ENCODE measurements at regions of chr5 and their contacts with region 1.

Region 1: GRCh38 chr5:14871210-14872069 is at the start of gene ANKH:
- DNase-seq: peak; percentile 66 to 93 (median 81)
- ATAC-seq: peak; percentile 81
- H3K4me3 ChIP-seq: peak within 1 kb of the TSS; percentile 63 to 78
- H3K4me3 Mint-ChIP-seq: peak within 1 kb of the TSS; percentile 95
- H3K27ac ChIP-seq: peak within 1 kb of the TSS; percentile 63 to 66
- H3K27ac Mint-ChIP-seq: peak within 1 kb of the TSS; percentile 94
- H3K4me1 ChIP-seq: peaks cover 13% of the 10 kb centered on the region
- H3K4me1 Mint-ChIP-seq: peaks cover 38% of the 10 kb centered on the region
- H3K27me3 ChIP-seq: no peaks in the 10 kb centered on the region
- H3K27me3 Mint-ChIP-seq: no peaks in the 10 kb centered on the region
- CTCF ChIP-seq: no peak
- total RNA-seq, gene ANKH: 56.0 to 57.7 TPM

Region 2: GRCh38 chr5:14706615-14707021 is 164.8 kb before region 1 on chr5:
- CTCF ChIA-PET with region 1: interaction called, 4 read pairs
- POLR2A ChIA-PET with region 1: interaction called, 7 read pairs
- intact Hi-C with region 1: loop called (anchors 2 to 5 kb)
- DNase-seq: peak in 8 of 9 experiments; percentile 33 to 83 (median 60)
- ATAC-seq: peak; percentile 94
- H3K4me3 ChIP-seq: no peak overlapping the region
- H3K4me3 Mint-ChIP-seq: peak overlapping the region; percentile 76
- H3K27ac ChIP-seq: peak overlapping the region; percentile 46 to 72
- H3K27ac Mint-ChIP-seq: peak overlapping the region; percentile 99
- H3K4me1 ChIP-seq: peaks cover 79% of the 10 kb centered on the region
- H3K4me1 Mint-ChIP-seq: peaks cover 80% of the 10 kb centered on the region
- H3K27me3 ChIP-seq: no peaks in the 10 kb centered on the region
- H3K27me3 Mint-ChIP-seq: no peaks in the 10 kb centered on the region
- CTCF ChIP-seq: no peak

Region 3: GRCh38 chr5:14809369-14810155 is 61.9 kb before region 1 on chr5:
- CTCF ChIA-PET with region 1: no interaction called
- POLR2A ChIA-PET with region 1: no interaction called
- intact Hi-C with region 1: loop called (anchors 1 to 5 kb)
- DNase-seq: peak; percentile 10 to 87 (median 77)
- ATAC-seq: peak; percentile 91
- H3K4me3 ChIP-seq: peak overlapping the region; percentile 16 to 18
- H3K4me3 Mint-ChIP-seq: peak overlapping the region; percentile 80
- H3K27ac ChIP-seq: peak overlapping the region in 1 of 2 experiments; percentile 53
- H3K27ac Mint-ChIP-seq: peak overlapping the region; percentile 91
- H3K4me1 ChIP-seq: peaks cover 42% of the 10 kb centered on the region
- H3K4me1 Mint-ChIP-seq: peaks cover 53% of the 10 kb centered on the region
- H3K27me3 ChIP-seq: no peaks in the 10 kb centered on the region
- H3K27me3 Mint-ChIP-seq: no peaks in the 10 kb centered on the region
- CTCF ChIP-seq: no peak

Region 4: GRCh38 chr5:14890846-14891245 is 19.4 kb after region 1 on chr5:
- CTCF ChIA-PET with region 1: no interaction called
- POLR2A ChIA-PET with region 1: no interaction called
- intact Hi-C with region 1: no loop called
- DNase-seq: no peak
- ATAC-seq: no peak
- H3K4me3 ChIP-seq: no peak overlapping the region
- H3K4me3 Mint-ChIP-seq: no peak overlapping the region
- H3K27ac ChIP-seq: no peak overlapping the region
- H3K27ac Mint-ChIP-seq: no peak overlapping the region
- H3K4me1 ChIP-seq: no peaks in the 10 kb centered on the region
- H3K4me1 Mint-ChIP-seq: no peaks in the 10 kb centered on the region
- H3K27me3 ChIP-seq: no peaks in the 10 kb centered on the region
- H3K27me3 Mint-ChIP-seq: no peaks in the 10 kb centered on the region
- CTCF ChIP-seq: no peak

Region 5: GRCh38 chr5:14976486-14976885 is 105.0 kb after region 1 on chr5:
- CTCF ChIA-PET with region 1: no interaction called
- POLR2A ChIA-PET with region 1: no interaction called
- intact Hi-C with region 1: no loop called
- DNase-seq: no peak
- ATAC-seq: no peak
- H3K4me3 ChIP-seq: no peak overlapping the region
- H3K4me3 Mint-ChIP-seq: no peak overlapping the region
- H3K27ac ChIP-seq: no peak overlapping the region
- H3K27ac Mint-ChIP-seq: no peak overlapping the region
- H3K4me1 ChIP-seq: no peaks in the 10 kb centered on the region
- H3K4me1 Mint-ChIP-seq: no peaks in the 10 kb centered on the region
- H3K27me3 ChIP-seq: no peaks in the 10 kb centered on the region
- H3K27me3 Mint-ChIP-seq: no peaks in the 10 kb centered on the region
- CTCF ChIP-seq: no peak

Region 6: DNA sequence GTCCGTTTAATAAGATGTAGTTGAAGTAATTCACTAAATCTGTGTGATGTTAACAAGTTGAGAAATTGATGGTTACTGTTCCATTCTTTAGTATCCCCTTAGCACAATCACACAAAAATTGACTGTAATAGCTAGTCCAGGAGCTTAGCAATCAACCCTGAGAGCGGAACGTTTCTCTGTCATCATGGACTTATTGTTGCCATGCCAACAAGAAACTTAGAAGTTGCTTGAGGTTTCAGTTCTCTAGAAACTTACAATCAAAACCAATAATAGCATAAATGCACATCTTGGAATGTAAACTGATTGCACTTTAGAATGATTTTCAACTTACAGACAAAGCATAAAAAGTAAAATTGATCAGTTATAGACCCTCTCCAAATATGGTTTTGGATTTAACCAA is 125.6 kb after region 1 on chr5:
- CTCF ChIA-PET with region 1: interaction called, 3 read pairs
- POLR2A ChIA-PET with region 1: interaction called, 3 read pairs
- intact Hi-C with region 1: loop called (anchors 2 to 5 kb)
- DNase-seq: peak in 1 of 9 experiments; percentile 35
- ATAC-seq: no peak
- H3K4me3 ChIP-seq: no peak overlapping the region
- H3K4me3 Mint-ChIP-seq: no peak overlapping the region
- H3K27ac ChIP-seq: no peak overlapping the region
- H3K27ac Mint-ChIP-seq: no peak overlapping the region
- H3K4me1 ChIP-seq: peaks cover 4% of the 10 kb centered on the region
- H3K4me1 Mint-ChIP-seq: peaks cover 14% of the 10 kb centered on the region
- H3K27me3 ChIP-seq: no peaks in the 10 kb centered on the region
- H3K27me3 Mint-ChIP-seq: no peaks in the 10 kb centered on the region
- CTCF ChIP-seq: no peak

Region 7: GRCh38 chr5:15003511-15003920 is 132.1 kb after region 1 on chr5:
- CTCF ChIA-PET with region 1: interaction called, 6 read pairs
- POLR2A ChIA-PET with region 1: no interaction called
- intact Hi-C with region 1: loop called in 1 of 2 experiments (anchors 2 kb)
- DNase-seq: peak; percentile 24 to 82 (median 53)
- ATAC-seq: peak; percentile 99
- H3K4me3 ChIP-seq: no peak overlapping the region
- H3K4me3 Mint-ChIP-seq: no peak overlapping the region
- H3K27ac ChIP-seq: no peak overlapping the region
- H3K27ac Mint-ChIP-seq: no peak overlapping the region
- H3K4me1 ChIP-seq: no peaks in the 10 kb centered on the region
- H3K4me1 Mint-ChIP-seq: no peaks in the 10 kb centered on the region
- H3K27me3 ChIP-seq: no peaks in the 10 kb centered on the region
- H3K27me3 Mint-ChIP-seq: peaks cover 5% of the 10 kb centered on the region
- CTCF ChIP-seq: peak; percentile 78

Region 8: GRCh38 chr5:15791274-15791673 is 919.8 kb after region 1 on chr5:
- CTCF ChIA-PET with region 1: no interaction called
- POLR2A ChIA-PET with region 1: no interaction called
- intact Hi-C with region 1: no loop called
- DNase-seq: no peak
- ATAC-seq: no peak
- H3K4me3 ChIP-seq: no peak overlapping the region
- H3K4me3 Mint-ChIP-seq: no peak overlapping the region
- H3K27ac ChIP-seq: no peak overlapping the region
- H3K27ac Mint-ChIP-seq: no peak overlapping the region
- H3K4me1 ChIP-seq: no peaks in the 10 kb centered on the region
- H3K4me1 Mint-ChIP-seq: no peaks in the 10 kb centered on the region
- H3K27me3 ChIP-seq: no peaks in the 10 kb centered on the region
- H3K27me3 Mint-ChIP-seq: no peaks in the 10 kb centered on the region
- CTCF ChIP-seq: no peak

Region 9: DNA sequence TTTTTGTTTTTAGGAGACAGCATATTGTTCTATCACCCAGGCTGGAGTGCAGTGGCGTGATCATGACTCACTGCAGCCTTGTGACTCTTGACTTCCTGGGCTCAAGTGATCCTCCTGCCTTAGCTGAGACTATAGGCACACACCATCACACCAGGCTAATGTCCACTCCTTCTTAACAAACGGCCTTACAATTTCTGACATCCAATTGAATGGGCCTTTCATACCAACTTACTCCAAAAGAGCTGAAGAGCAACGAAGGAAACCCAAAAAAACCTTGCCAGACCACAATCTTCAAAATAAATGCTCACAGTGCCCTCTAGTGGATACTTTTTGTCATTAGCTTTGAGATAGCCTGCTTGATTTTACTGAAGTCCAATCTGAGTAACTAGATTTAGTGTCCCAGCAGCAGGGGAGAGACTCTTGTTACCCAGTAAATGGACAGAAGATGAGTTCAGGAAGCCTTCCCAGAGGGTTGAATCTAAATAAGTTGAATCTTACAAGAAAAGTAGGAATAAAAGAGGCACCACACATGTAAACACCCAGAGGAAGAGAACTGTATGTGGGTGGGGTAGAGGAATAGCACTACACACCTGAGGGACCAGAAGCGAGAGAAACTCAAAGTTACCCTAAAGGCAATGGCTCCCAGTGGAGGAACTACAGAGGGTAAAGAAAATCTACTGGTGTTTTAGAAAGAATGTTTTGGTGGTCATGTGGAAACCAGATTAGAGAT is 1584.8 kb after region 1 on chr5:
- CTCF ChIA-PET with region 1: no interaction called
- POLR2A ChIA-PET with region 1: no interaction called
- intact Hi-C with region 1: loop called in 1 of 2 experiments (anchors 5 kb)
- DNase-seq: peak in 4 of 9 experiments; percentile 20 to 80 (median 51)
- ATAC-seq: peak; percentile 76
- H3K4me3 ChIP-seq: no peak overlapping the region
- H3K4me3 Mint-ChIP-seq: peak overlapping the region; percentile 29
- H3K27ac ChIP-seq: peak overlapping the region in 1 of 2 experiments; percentile 41
- H3K27ac Mint-ChIP-seq: peak overlapping the region; percentile 65
- H3K4me1 ChIP-seq: peaks cover 38% of the 10 kb centered on the region
- H3K4me1 Mint-ChIP-seq: peaks cover 67% of the 10 kb centered on the region
- H3K27me3 ChIP-seq: no peaks in the 10 kb centered on the region
- H3K27me3 Mint-ChIP-seq: no peaks in the 10 kb centered on the region
- CTCF ChIP-seq: peak; percentile 77

Region 10: DNA sequence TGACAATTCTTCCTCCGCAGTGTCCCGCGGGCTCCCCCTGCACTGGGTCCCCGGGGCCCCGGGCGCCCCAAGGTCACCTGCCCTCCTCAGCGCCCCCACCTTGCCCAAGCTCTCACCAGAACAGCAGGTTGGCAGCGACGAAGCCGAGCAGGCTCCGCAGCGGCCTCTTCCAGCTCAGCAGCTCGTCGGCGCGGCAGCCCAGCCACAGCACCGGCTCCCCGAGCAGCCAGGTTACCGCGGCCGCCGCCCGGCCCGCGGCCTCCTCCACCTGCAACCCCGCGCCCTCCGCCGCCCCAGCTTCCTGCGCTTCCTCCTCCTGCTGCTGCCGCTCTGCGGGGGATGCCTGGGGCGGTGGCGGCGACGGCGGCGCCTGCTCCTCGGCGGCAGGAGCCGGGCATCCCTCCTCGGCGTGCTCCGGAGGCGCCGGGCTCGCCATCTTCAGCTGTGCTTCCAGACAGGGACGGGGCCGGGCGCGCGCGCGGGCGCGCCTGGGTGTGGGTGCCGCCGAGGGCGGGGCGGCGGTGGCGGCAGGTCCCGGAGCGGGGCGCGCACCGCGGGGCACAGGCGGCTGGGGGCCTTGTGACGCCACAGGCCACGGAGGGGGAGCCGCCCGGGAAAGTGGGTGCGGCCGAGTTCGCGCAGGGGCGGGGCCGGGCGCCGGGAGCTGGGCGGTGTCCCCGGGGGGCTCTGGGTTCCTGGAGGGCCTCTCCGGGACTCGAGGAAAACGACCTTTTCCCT is 1745.3 kb after region 1 on chr5 and contains the start of gene RETREG1:
- CTCF ChIA-PET with region 1: no interaction called
- POLR2A ChIA-PET with region 1: interaction called, 3 read pairs
- intact Hi-C with region 1: loop called in 1 of 2 experiments (anchors 10 kb)
- DNase-seq: peak; percentile 73 to 93 (median 90)
- ATAC-seq: peak; percentile 80
- H3K4me3 ChIP-seq: peak within 1 kb of the TSS; percentile 69 to 79
- H3K4me3 Mint-ChIP-seq: peak within 1 kb of the TSS; percentile 98
- H3K27ac ChIP-seq: peak within 1 kb of the TSS; percentile 93 to 97
- H3K27ac Mint-ChIP-seq: peak within 1 kb of the TSS; percentile 97
- H3K4me1 ChIP-seq: peaks cover 46% of the 10 kb centered on the region
- H3K4me1 Mint-ChIP-seq: peaks cover 48% of the 10 kb centered on the region
- H3K27me3 ChIP-seq: peaks cover 0 to 4% of the 10 kb centered on the region in 2 experiments
- H3K27me3 Mint-ChIP-seq: no peaks in the 10 kb centered on the region
- CTCF ChIP-seq: no peak
- total RNA-seq, gene RETREG1: 62.2 to 73.9 TPM

Measured in CD8-positive, alpha-beta T cell (primary cell).